Activated CD4-positive, alpha-beta T cell treated with anti-CD3 and anti-CD28 coated beads for 36 hours (primary cell): ENCODE measurements at regions of chr13 and their contacts with region 1.

Region 1: GRCh38 chr13:27171827-27172494 is 350 bp upstream of the USP12 start:
- DNase-seq: peak; percentile 93
- ATAC-seq: peak; percentile 84
- H3K4me3 Mint-ChIP-seq: peak overlapping the region; percentile 70
- H3K27ac Mint-ChIP-seq: peak overlapping the region; percentile 88
- H3K4me1 Mint-ChIP-seq: peaks cover 60% of the 10 kb centered on the region
- H3K27me3 Mint-ChIP-seq: no peaks in the 10 kb centered on the region

Region 2: DNA sequence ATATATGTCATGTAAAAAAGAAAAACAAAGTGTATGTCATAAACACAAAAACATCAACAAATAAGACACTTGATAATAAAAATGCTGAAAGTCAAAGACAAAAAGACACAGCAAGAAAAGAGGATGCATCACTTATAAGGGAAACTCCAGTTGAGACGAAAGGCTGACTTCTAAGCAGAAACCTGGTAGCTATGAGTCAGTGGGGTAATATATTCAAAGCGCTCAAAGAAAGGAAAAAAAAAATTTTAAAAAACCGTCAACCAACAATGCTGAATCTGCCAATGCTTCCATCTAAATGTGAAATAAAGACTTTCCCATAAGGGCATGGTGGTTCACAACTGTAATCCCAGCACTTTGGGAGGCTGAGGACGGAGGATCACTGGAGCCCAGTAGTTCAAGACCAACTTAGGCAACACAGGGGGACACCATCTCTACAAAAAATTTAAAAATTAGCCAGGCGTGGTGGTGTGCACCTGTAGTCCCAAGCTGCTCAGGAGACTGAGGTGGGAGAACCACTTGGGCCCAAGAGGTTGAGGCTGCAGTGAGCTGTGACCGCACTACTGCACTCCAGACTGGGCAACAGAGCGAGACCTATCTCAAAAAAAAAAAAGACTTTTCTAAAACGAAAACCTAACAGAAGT is 24.3 kb before region 1 on chr13:
- CTCF ChIA-PET with region 1: interaction called, 3 read pairs
- POLR2A ChIA-PET with region 1: no interaction called
- intact Hi-C with region 1: loop called (anchors 1 kb)
- DNase-seq: no peak
- ATAC-seq: peak; percentile 89
- H3K4me3 Mint-ChIP-seq: peak overlapping the region; percentile 49
- H3K27ac Mint-ChIP-seq: peak overlapping the region; percentile 96
- H3K4me1 Mint-ChIP-seq: peaks cover 73% of the 10 kb centered on the region
- H3K27me3 Mint-ChIP-seq: no peaks in the 10 kb centered on the region

Region 3: GRCh38 chr13:27270594-27271520 is 98.9 kb after region 1 on chr13 and contains the start of gene RASL11A:
- CTCF ChIA-PET with region 1: interaction called, 3 read pairs
- POLR2A ChIA-PET with region 1: interaction called, 4 read pairs
- intact Hi-C with region 1: loop called in 1 of 2 experiments (anchors 5 kb)
- DNase-seq: peak; percentile 82
- ATAC-seq: peak; percentile 91
- H3K4me3 Mint-ChIP-seq: peak within 1 kb of the TSS; percentile 79
- H3K27ac Mint-ChIP-seq: peak within 1 kb of the TSS; percentile 76
- H3K4me1 Mint-ChIP-seq: peaks cover 14% of the 10 kb centered on the region
- H3K27me3 Mint-ChIP-seq: peaks cover 2% of the 10 kb centered on the region
- total RNA-seq, gene RASL11A: 3.2 to 3.5 TPM

Region 4: DNA sequence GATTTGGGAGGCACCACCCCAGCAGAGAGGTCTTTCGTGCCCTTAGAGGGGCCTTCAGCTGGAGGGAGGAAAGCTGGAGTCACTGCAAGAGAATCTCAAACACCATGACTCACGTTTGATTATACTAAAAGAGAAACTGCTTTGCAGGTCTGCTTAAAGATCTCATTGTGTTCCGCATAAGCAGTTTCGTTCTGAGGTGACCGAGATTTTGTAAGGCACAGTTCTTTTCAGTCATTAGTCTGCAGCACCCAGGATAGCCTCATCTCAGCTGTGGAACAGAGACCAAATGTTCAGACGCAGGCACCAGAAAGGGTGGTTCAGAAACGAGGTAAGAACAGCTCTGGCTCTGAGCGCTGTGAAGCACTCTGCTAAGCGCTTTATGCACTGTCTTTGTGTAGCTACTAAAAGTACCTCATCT is 181.2 kb after region 1 on chr13:
- CTCF ChIA-PET with region 1: interaction called, 3 read pairs
- POLR2A ChIA-PET with region 1: no interaction called
- intact Hi-C with region 1: loop called in 1 of 2 experiments (anchors 5 kb)
- DNase-seq: peak; percentile 71
- ATAC-seq: peak; percentile 98
- H3K4me3 Mint-ChIP-seq: peak overlapping the region; percentile 48
- H3K27ac Mint-ChIP-seq: peak overlapping the region; percentile 58
- H3K4me1 Mint-ChIP-seq: peaks cover 19% of the 10 kb centered on the region
- H3K27me3 Mint-ChIP-seq: peaks cover 11% of the 10 kb centered on the region

Region 5: DNA sequence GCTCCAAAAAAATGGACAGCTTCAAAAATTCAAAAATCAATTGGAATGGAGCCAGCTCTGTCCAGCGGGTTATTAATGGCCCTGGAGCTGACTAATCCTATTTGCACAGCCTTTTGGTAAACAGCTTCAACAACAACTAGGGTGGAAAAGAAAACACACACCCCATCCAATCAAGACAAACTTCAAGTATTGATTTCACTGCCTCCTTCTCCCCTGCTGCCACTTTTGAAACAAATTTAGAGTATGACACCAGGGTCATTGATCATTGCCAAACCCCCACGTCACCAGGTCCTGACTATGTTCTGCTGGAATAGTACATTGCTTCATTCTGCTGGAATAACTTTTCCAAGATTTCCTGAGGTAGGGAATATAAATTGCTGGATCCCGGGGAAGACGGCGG is 195.6 kb after region 1 on chr13:
- CTCF ChIA-PET with region 1: no interaction called
- POLR2A ChIA-PET with region 1: no interaction called
- intact Hi-C with region 1: no loop called
- DNase-seq: no peak
- ATAC-seq: no peak
- H3K4me3 Mint-ChIP-seq: no peak overlapping the region
- H3K27ac Mint-ChIP-seq: no peak overlapping the region
- H3K4me1 Mint-ChIP-seq: no peaks in the 10 kb centered on the region
- H3K27me3 Mint-ChIP-seq: peaks cover 6% of the 10 kb centered on the region

Region 6: DNA sequence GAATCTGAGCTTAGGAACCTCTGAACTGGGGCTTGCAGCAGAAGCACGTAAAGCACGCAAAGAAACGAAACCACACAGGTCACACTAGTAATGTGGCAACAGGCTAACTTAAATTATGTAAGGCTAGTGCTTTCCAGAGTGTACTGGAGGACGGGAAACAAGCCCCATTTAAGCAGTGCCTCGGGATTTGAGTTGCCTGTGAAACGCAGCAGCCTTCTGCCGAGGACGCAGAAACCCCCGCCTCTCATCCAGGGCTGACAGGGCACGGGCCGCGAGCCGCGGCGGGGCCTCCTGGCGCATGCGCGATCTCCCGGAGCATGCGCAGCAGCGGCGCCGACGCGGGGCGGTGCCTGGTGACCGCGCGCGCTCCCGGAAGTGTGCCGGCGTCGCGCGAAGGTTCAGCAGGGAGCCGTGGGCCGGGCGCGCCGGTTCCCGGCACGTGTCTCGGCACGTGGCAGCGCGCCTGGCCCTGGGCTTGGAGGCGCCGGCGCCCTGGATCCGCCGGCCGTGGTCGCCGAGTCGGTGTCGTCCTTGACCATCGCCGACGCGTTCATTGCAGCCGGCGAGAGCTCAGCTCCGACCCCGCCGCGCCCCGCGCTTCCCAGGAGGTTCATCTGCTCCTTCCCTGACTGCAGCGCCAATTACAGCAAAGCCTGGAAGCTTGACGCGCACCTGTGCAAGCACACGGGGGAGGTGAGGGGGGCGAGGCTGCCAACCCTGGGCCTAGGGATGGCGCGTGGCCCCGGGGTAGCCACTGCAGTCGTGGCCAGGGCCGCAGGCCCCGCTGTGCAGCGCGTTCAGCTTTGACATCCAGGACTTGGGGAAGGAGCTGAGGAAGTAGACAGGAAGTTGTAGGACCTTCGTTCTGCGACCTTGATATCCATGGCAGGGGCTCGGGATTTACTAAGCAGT is 252.5 kb after region 1 on chr13 and contains the start of gene GTF3A:
- CTCF ChIA-PET with region 1: no interaction called
- POLR2A ChIA-PET with region 1: no interaction called
- intact Hi-C with region 1: loop called (anchors 1 to 10 kb)
- DNase-seq: peak; percentile 92
- ATAC-seq: peak; percentile 66
- H3K4me3 Mint-ChIP-seq: peak within 1 kb of the TSS; percentile 80
- H3K27ac Mint-ChIP-seq: peak within 1 kb of the TSS; percentile 97
- H3K4me1 Mint-ChIP-seq: peaks cover 45% of the 10 kb centered on the region
- H3K27me3 Mint-ChIP-seq: no peaks in the 10 kb centered on the region
- total RNA-seq, gene GTF3A: 177 to 208 TPM

Region 7: GRCh38 chr13:27449936-27450828 is 278.2 kb after region 1 on chr13 and contains the start of gene MTIF3:
- CTCF ChIA-PET with region 1: interaction called, 4 read pairs
- POLR2A ChIA-PET with region 1: no interaction called
- intact Hi-C with region 1: loop called in 1 of 2 experiments (anchors 1 kb)
- DNase-seq: peak; percentile 98
- ATAC-seq: peak; percentile 86
- H3K4me3 Mint-ChIP-seq: peak within 1 kb of the TSS; percentile 89
- H3K27ac Mint-ChIP-seq: peak within 1 kb of the TSS; percentile 99
- H3K4me1 Mint-ChIP-seq: peaks cover 53% of the 10 kb centered on the region
- H3K27me3 Mint-ChIP-seq: no peaks in the 10 kb centered on the region
- total RNA-seq, gene MTIF3: 27.5 to 43.0 TPM

Region 8: DNA sequence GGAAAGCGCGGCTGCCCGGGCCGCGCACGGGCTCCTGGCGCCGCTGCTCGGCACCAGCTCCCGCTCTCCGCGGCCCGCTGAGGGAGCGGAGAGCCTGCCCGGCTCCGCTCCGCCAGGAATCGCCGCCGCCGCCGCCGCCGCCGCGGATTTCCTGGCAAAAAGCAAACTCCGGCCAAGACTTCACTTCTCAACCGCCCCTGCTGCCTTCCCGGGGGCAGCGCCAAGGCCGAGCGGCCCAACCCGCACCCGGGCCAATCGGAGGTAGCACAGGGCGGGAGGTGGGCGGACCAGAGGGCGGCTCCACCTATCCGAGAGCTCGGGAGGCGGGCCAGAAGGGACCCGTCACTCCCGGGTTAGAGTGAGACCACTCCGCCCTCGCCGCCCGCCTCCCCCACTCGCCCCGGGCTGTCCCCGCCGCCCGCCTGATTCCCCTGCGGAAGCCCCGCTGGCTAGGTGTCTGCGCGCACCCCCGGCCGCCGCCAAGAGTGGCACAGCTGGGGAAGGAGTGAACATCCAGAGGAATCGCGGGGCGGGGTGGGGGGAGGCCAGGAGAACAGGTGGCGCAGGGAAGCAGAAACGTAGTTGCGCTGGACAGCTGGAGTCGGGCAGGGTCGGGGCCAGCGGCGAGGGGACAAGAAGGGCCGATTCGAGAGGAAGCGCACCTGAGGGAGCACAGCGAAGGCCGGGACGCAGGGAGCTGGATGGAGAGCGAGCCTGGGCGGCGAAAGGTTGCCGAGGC is 448.6 kb after region 1 on chr13 and contains the start of gene LNX2:
- CTCF ChIA-PET with region 1: no interaction called
- POLR2A ChIA-PET with region 1: no interaction called
- intact Hi-C with region 1: loop called in 1 of 2 experiments (anchors 1 kb)
- DNase-seq: peak; percentile 98
- ATAC-seq: peak; percentile 92
- H3K4me3 Mint-ChIP-seq: peak within 1 kb of the TSS; percentile 92
- H3K27ac Mint-ChIP-seq: peak within 1 kb of the TSS; percentile 91
- H3K4me1 Mint-ChIP-seq: peaks cover 51% of the 10 kb centered on the region
- H3K27me3 Mint-ChIP-seq: no peaks in the 10 kb centered on the region
- total RNA-seq, gene LNX2: 4.7 to 4.8 TPM